ENCODE measurements at regions of chr3 and their contacts with region 1.

Region 1: DNA sequence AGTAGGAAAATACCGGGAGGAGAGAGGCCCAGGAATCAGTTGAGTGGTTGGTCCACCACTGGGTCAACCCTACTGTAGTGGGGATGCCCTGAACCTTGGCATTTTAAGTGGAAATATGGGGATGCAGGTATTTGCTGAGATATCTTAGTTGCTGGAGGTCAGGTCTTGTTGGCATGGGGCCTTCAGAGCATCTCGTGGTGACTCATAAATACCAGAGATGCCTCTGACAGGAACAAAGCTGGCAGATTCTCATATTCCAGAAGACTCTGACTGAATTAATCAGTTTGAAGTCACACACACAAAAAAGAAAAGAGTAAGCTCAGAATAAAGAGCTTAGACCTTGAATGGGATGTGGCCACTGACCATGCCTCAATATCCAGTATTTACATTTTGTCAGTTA is 91.6 kb downstream of the CACNA2D3 start:
- DNase-seq: no peak
- H3K4me3 ChIP-seq: no peak overlapping the region
- H3K27ac ChIP-seq: no peak overlapping the region
- H3K4me1 ChIP-seq: no peaks in the 10 kb centered on the region
- H3K27me3 ChIP-seq: no peaks in the 10 kb centered on the region
- CTCF ChIP-seq: no peak
- EP300 ChIP-seq: no peak
- POLR2A ChIP-seq: no peak

Region 2: DNA sequence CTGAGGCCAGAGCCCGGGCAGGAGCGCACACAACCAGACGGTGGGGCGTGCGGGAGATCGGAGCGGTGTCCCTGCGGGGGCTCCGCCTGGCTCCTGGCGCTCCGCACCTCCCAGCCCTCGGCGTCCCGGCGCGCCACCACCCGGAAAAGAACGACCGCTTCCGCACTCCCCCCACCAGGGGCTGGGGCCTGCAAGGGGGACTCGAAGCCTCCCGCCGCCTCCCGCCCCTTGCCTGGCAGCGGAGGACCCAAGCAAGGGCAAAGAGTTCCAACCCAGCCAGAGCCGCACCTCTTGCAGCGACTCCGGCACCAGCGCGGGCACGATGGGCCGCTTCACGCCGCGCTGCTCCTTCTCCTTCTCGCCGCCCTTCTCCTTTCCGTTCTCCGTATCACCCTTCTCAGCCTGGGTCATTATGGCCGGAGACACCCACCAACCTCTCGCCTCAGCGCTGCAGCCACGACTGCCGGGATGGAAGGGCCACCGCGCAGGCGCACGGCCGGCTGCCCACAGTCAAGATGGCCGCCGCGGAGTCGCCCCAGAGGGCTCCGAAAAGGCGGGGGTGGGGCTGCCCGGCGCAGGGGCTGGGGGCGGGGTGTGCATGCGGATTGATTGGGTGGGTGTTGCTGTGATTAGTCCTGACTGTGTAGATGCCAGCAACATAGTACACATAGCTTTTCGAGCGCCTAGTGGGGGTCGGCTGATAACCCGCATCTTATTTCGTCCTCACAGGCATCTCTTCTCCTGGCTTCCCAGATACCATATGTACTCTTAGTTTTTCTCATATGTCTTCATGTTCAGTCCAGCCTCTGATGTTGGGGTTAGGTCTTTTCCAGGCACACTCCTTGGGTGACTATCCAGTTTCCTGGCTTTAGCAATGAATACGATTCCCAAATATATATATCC is 332.0 kb before region 1 on chr3 and contains the start of gene ACTR8:
- intact Hi-C with region 1: no loop called
- DNase-seq: peak; percentile 82 to 92 (median 88)
- H3K4me3 ChIP-seq: peak within 1 kb of the TSS; percentile 98
- H3K27ac ChIP-seq: peak within 1 kb of the TSS; percentile 56 to 75
- H3K4me1 ChIP-seq: peaks cover 9% of the 10 kb centered on the region
- H3K27me3 ChIP-seq: no peaks in the 10 kb centered on the region
- CTCF ChIP-seq: peak in 2 of 3 donors; percentile 9 to 11
- EP300 ChIP-seq: no peak
- POLR2A ChIP-seq: peak; percentile 46
- total RNA-seq, gene ACTR8: 12.5 to 34.5 (median 21.3) TPM

Region 3: DNA sequence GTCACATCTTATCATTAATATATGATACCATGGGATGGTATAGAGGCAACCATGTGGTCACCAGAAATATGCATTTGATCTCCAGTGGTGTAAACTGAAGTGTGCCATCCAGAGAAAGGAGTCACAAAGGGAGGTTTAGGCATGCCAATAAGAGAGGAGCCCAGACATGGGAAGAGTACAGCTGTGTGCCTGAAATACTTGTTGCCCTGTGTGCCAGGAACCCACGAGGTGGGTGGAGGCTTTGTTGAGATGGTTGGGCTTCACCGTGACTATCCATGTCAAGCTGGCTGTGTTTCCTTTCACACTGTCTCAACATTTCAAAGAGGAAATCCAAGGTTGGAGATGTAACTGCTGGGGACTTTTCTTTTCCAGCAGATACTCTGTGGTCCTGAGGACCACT is 48.0 kb before region 1 on chr3:
- intact Hi-C with region 1: loop called in 1 of 4 experiments (anchors 2 kb)
- DNase-seq: no peak
- H3K4me3 ChIP-seq: no peak overlapping the region
- H3K27ac ChIP-seq: no peak overlapping the region
- H3K4me1 ChIP-seq: no peaks in the 10 kb centered on the region
- H3K27me3 ChIP-seq: no peaks in the 10 kb centered on the region
- CTCF ChIP-seq: no peak
- EP300 ChIP-seq: no peak
- POLR2A ChIP-seq: no peak

Region 4: DNA sequence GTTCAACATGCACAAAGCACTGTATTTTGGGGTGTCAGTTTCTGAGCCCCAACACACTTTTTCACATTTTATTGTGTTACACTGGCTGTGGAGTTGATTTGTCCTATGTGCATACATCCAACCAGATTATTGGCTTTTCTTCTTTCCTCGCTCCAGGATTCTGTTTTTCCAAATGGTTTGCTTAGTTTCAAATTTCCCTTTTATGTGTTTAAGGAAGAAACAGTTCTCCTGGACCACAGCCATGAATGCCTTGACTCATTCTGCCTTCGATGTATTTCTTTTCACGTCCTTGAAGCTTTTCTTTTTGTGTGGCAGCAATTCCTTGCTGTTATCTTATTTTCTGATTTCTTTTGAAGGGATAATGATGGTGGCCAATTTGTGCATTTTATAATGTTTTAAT is 37.8 kb before region 1 on chr3:
- intact Hi-C with region 1: no loop called
- DNase-seq: no peak
- H3K4me3 ChIP-seq: no peak overlapping the region
- H3K27ac ChIP-seq: no peak overlapping the region
- H3K4me1 ChIP-seq: peaks cover 2% of the 10 kb centered on the region
- H3K27me3 ChIP-seq: no peaks in the 10 kb centered on the region
- CTCF ChIP-seq: no peak
- EP300 ChIP-seq: no peak
- POLR2A ChIP-seq: no peak

Region 5: DNA sequence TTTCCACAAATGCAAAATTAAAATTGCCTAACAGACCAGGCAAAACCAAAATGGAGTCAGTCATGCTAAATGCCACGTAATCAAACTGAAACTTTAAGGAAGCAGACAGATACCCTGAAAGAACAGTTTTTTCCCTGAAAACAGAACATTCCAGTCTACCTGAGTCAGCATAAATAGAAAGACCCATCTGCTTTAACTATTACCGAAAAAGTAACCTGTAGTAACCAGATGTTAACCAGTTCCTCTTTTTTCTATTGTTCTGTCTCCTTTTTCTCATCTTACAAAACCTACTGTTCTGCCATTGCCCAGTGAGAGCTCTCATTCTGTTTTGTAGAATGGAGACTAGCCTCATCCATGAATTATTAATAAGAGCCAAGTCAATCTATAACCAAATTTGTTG is 194.4 kb after region 1 on chr3:
- intact Hi-C with region 1: no loop called
- DNase-seq: no peak
- H3K4me3 ChIP-seq: no peak overlapping the region
- H3K27ac ChIP-seq: no peak overlapping the region
- H3K4me1 ChIP-seq: no peaks in the 10 kb centered on the region
- H3K27me3 ChIP-seq: no peaks in the 10 kb centered on the region
- CTCF ChIP-seq: no peak
- EP300 ChIP-seq: no peak
- POLR2A ChIP-seq: no peak

Measured in ovary (tissue), 10 donors.